A673 (cell line): ENCODE measurements at regions of chr3 and their contacts with region 1.

Region 1: GRCh38 chr3:107753480-107753879 is 230.7 kb downstream of the BBX start:
- DNase-seq: peak; percentile 68
- H3K4me3 ChIP-seq: no peak overlapping the region
- H3K27ac ChIP-seq: no peak overlapping the region
- H3K4me1 ChIP-seq: no peaks in the 10 kb centered on the region
- H3K27me3 ChIP-seq: no peaks in the 10 kb centered on the region
- CTCF ChIP-seq: peak; percentile 64

Region 2: GRCh38 chr3:107574650-107575049 is 178.8 kb before region 1 on chr3:
- CTCF ChIA-PET with region 1: no interaction called
- POLR2A ChIA-PET with region 1: no interaction called
- intact Hi-C with region 1: loop called (anchors 10 kb)
- DNase-seq: peak; percentile 25
- H3K4me3 ChIP-seq: no peak overlapping the region
- H3K27ac ChIP-seq: no peak overlapping the region
- H3K4me1 ChIP-seq: no peaks in the 10 kb centered on the region
- H3K27me3 ChIP-seq: no peaks in the 10 kb centered on the region
- CTCF ChIP-seq: peak; percentile 63